ENCODE measurements at regions of chr19 and their contacts with region 1.

Region 1: GRCh38 chr19:13022859-13023636 is 27.8 kb downstream of the NFIX start:
- DNase-seq: peak; percentile 95
- H3K4me3 ChIP-seq: peak overlapping the region; percentile 48 to 53 (median 51)
- H3K27ac ChIP-seq: peak overlapping the region; percentile 88 to 97 (median 94)
- H3K4me1 ChIP-seq: peaks cover 78 to 100% (median 99%) of the 10 kb centered on the region in 4 donors
- H3K27me3 ChIP-seq: no peaks in the 10 kb centered on the region
- CTCF ChIP-seq: peak in 1 of 3 experiments; percentile 9
- EP300 ChIP-seq: no peak
- POLR2A ChIP-seq: no peak

Region 2: DNA sequence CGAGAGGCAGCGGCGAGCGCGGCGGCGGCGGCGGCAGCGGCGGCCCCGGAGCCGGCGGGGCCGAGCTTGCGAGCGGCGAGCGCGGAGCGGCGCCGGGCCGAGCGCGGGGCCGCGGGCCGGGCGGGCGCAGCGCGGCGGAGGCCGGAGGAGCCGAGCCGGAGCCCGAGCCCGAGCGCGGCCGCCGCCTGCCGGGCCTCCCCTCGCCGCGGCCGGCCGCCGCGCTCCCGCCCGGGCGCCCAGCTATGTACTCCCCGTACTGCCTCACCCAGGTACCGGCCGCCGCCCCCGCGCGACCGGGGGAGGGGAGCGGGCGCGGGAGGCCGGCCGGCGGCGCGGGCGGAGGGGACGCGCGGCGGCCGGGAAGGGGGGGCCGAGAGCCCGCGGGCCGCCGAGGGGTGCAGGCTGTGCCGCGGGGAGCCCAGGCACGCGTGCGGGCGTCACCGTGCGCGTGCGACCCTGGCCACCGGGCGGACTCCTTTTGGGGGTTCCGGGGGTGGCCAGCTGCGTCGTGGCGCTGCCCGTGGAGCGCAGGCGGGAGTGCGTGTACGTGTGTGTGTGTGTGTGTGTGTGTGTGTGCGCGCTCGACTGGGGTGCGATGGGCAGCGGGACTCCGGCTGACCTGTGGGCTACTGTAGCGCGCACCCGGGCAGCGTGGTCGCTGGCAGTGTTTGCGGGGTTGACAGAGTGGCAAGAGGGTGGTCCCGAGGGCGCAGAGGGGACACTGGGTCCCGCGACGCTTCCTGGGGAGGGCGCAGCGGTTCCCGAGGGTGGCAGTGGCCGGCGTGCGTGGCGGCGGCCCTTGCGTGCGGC is 27.2 kb before region 1 on chr19:
- intact Hi-C with region 1: loop called (anchors 2 kb)
- DNase-seq: no peak
- H3K4me3 ChIP-seq: peak overlapping the region; percentile 74 to 92 (median 78)
- H3K27ac ChIP-seq: peak overlapping the region; percentile 88 to 98 (median 97)
- H3K4me1 ChIP-seq: peaks cover 22 to 53% (median 51%) of the 10 kb centered on the region in 4 donors
- H3K27me3 ChIP-seq: no peaks in the 10 kb centered on the region
- CTCF ChIP-seq: no peak
- EP300 ChIP-seq: no peak
- POLR2A ChIP-seq: no peak